ENCODE measurements at regions of chr11 and their contacts with region 1.

Region 1: GRCh38 chr11:128342511-128343134 is 244.7 kb downstream of the ETS1 start:
- DNase-seq: peak; percentile 58
- ATAC-seq: peak; percentile 82
- H3K4me3 ChIP-seq: no peak overlapping the region
- H3K4me3 Mint-ChIP-seq: peak overlapping the region; percentile 18
- H3K27ac ChIP-seq: peak overlapping the region in 1 of 2 donors; percentile 58
- H3K27ac Mint-ChIP-seq: peak overlapping the region; percentile 83
- H3K4me1 ChIP-seq: peaks cover 31 to 34% of the 10 kb centered on the region in 2 donors
- H3K4me1 Mint-ChIP-seq: peaks cover 37% of the 10 kb centered on the region
- H3K27me3 ChIP-seq: no peaks in the 10 kb centered on the region
- H3K27me3 Mint-ChIP-seq: no peaks in the 10 kb centered on the region
- CTCF ChIP-seq: no peak

Region 2: GRCh38 chr11:128328955-128329551 is 13.6 kb before region 1 on chr11:
- CTCF ChIA-PET with region 1: interaction called, 3 read pairs
- POLR2A ChIA-PET with region 1: no interaction called
- intact Hi-C with region 1: loop called (anchors 2 kb)
- DNase-seq: peak; percentile 34
- ATAC-seq: peak; percentile 51
- H3K4me3 ChIP-seq: peak overlapping the region in 1 of 5 experiments; percentile 7
- H3K4me3 Mint-ChIP-seq: peak overlapping the region; percentile 50
- H3K27ac ChIP-seq: no peak overlapping the region
- H3K27ac Mint-ChIP-seq: peak overlapping the region; percentile 28
- H3K4me1 ChIP-seq: peaks cover 25 to 31% of the 10 kb centered on the region in 2 donors
- H3K4me1 Mint-ChIP-seq: peaks cover 44% of the 10 kb centered on the region
- H3K27me3 ChIP-seq: no peaks in the 10 kb centered on the region
- H3K27me3 Mint-ChIP-seq: no peaks in the 10 kb centered on the region
- CTCF ChIP-seq: no peak